Activated CD4-positive, alpha-beta T cell treated with anti-CD3 and anti-CD28 coated beads, Interleukin-2, amount 10 ng/mL, durations not matched to agents 24 days and 14 days (primary cell): ENCODE measurements at regions of chr12 and their contacts with region 1.

Region 1: DNA sequence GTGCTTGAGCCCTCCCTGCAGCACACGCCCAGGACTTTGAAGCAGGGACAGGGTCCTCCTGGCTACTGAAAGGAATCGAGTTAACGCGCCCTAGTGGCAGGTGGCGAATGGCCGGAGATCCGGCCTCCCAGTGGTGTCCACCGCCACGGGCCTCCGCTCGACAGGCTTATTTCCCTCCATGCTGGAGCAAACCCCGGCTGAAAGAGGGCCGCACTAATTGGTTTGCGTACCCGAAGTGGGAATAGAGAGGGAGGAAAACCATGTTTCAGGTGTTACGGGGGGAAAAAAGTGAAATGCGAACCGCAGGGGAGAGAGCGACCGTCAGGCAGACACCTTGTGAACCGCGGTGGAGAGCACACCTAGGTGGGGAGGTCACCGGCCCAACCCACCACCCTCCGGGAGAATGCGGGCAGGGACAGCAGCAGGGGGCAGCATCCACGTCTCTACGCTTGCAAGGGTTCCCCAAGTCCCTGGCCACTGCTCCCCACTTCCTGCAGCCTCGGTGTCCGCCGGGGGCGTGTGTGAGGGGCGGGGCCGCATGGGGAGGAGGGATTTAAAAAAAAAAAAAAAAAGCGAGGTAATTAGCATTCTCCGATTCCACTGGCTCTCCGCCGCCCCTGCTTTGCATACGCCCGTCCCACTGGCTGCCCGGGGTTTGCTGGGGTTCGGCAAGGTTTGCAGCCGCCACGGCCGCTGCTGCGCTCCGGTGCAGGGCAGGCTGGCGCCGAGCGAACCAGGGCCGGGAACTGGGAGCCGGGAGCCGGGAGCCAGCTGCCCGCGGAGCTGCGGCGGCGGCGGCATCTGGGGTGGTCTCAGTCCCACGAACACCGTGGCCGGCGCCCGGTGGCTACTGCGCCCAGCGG is 224.6 kb upstream of the CRY1 start:
- DNase-seq: peak; percentile 97
- H3K4me3 Mint-ChIP-seq: peak overlapping the region; percentile 88
- H3K27ac Mint-ChIP-seq: peak overlapping the region; percentile 50
- H3K4me1 Mint-ChIP-seq: peaks cover 26% of the 10 kb centered on the region
- H3K27me3 Mint-ChIP-seq: peaks cover 28% of the 10 kb centered on the region

Region 2: DNA sequence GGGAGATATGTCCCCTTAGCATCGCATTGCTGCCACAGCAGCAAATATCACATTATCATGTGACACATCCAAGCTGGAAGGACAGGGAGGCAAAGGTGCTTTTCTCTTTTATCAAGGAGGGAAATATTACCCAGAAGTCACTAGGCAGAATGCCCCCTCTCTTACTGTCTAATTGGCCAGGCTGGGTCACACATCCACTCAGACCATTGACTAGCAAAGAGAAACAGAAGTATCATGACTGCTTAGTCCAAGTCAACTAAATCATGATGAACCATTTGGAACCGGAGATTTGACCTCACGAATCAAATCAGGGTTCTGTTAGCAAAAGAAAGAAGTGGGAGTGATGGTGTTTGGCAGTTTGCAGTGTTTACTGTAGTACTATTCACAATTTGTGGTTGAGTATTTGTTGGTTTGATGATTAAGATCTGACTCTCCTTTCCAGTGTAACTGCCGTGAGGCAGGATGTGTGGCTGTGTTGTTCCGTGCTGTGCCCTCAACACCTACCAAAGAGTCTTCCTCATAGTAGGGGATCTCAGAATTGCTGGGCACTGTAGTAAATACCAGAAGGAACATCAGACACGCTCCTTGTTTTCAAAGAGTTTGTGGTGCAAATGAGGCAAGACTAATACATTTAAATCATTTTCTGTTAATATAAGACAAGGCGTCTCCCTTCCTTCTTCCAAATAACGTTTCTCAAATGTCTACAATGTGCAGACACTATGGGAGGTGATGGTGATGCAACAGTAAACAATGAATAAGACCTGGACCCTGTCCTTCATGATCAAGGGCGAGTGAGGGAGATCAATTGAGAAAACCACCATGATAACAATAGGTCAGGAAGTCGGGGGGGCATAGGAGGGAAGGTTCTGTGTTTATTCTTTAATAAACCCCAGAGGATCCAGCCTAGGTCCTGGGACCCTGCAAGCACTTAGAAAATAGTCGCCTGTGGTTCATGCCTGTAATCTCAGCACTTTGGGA is 30.3 kb before region 1 on chr12:
- intact Hi-C with region 1: loop called (anchors 1 kb)
- DNase-seq: peak; percentile 80
- H3K4me3 Mint-ChIP-seq: peak overlapping the region; percentile 29
- H3K27ac Mint-ChIP-seq: peak overlapping the region; percentile 66
- H3K4me1 Mint-ChIP-seq: peaks cover 17% of the 10 kb centered on the region
- H3K27me3 Mint-ChIP-seq: peaks cover 2% of the 10 kb centered on the region

Region 3: DNA sequence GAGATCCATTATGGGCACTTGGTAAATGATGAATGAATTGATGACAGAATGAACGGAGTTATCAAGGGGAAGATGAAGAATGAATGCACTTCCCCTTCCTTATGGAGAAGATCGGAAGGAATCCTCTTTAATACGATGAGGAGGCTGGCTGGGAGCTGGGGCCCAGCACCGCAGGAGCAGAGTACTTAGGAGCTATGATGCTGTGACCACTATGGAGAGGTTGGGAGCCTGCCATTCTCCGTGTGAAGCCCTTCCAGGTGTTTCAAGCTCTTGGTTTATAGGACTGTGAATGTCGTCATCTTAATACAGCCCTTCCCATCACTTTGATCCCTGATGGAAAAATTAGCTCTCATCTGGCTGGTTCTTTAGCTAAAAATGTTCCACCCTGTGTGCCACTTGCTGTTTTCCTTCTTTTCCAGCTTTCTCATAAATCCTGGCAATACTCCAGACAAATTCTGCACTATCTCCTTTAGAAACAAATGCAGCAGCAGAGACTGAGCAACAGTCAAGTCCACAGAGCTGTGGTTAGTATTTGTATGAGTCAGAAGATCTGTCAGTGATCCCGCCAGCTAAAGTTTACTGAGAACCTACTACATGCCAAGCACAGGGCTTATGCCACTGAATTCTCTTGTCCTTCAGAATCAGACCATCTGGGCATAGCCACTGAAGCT is 38.4 kb after region 1 on chr12:
- intact Hi-C with region 1: loop called (anchors 1 kb)
- DNase-seq: peak; percentile 70
- H3K4me3 Mint-ChIP-seq: peak overlapping the region; percentile 4
- H3K27ac Mint-ChIP-seq: no peak overlapping the region
- H3K4me1 Mint-ChIP-seq: peaks cover 65% of the 10 kb centered on the region
- H3K27me3 Mint-ChIP-seq: no peaks in the 10 kb centered on the region

Region 4: DNA sequence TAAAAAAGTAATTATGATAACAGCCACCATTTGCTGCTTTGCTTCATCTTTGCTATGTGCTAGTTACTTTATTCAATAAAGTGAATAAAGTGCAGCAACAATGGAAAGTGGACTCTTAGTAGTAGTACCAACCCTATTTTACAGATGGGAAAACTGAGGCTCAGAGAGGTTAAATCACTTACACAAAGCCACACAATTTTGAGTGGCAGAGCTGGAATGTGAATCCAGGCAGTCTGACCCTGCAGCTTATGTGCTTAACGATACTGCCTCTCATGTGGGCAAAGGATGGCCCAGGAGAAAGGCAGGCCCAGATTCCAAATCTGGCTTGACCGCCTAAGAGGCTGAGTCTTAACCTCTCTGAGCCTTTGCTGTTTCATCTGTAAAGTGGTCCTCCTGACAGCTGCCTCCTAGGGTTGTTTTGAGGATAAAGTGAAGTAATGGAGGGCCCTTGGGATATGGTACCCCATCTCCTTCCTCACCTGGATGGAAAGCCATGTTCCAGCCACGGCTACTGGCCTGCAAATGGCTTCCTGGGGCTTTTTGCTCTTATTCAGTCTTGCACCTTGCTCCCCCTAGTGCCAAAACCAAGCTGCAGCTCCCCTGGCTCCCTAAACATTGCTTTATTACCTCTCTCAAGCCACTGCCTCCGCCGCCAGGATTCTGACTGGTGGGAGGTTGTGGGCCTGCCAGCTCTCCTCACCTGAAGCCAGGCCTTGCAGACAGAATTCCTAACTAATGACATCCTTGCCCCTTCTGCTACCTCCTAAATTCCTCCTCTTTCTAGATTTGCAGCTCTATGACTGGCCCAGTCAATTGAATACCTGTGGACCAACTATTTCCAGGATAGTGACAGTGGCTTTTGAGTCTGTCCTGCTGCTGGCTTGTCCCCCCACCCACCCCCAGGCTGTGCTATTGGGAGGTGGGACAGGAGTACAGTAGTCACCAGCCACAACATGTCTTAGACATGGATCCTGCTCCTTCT is 84.3 kb after region 1 on chr12:
- intact Hi-C with region 1: loop called (anchors 1 kb)
- DNase-seq: peak; percentile 89
- H3K4me3 Mint-ChIP-seq: no peak overlapping the region
- H3K27ac Mint-ChIP-seq: no peak overlapping the region
- H3K4me1 Mint-ChIP-seq: peaks cover 30% of the 10 kb centered on the region
- H3K27me3 Mint-ChIP-seq: no peaks in the 10 kb centered on the region

Region 5: GRCh38 chr12:107685360-107686248 is 367.6 kb after region 1 on chr12 and contains the start of gene PWP1:
- intact Hi-C with region 1: loop called (anchors 5 kb)
- DNase-seq: peak; percentile 99
- H3K4me3 Mint-ChIP-seq: peak within 1 kb of the TSS; percentile 93
- H3K27ac Mint-ChIP-seq: peak within 1 kb of the TSS; percentile 92
- H3K4me1 Mint-ChIP-seq: peaks cover 26% of the 10 kb centered on the region
- H3K27me3 Mint-ChIP-seq: peaks cover 2% of the 10 kb centered on the region
- total RNA-seq, gene PWP1: 56.3 and 63.2 TPM in 2 replicates

Region 6: DNA sequence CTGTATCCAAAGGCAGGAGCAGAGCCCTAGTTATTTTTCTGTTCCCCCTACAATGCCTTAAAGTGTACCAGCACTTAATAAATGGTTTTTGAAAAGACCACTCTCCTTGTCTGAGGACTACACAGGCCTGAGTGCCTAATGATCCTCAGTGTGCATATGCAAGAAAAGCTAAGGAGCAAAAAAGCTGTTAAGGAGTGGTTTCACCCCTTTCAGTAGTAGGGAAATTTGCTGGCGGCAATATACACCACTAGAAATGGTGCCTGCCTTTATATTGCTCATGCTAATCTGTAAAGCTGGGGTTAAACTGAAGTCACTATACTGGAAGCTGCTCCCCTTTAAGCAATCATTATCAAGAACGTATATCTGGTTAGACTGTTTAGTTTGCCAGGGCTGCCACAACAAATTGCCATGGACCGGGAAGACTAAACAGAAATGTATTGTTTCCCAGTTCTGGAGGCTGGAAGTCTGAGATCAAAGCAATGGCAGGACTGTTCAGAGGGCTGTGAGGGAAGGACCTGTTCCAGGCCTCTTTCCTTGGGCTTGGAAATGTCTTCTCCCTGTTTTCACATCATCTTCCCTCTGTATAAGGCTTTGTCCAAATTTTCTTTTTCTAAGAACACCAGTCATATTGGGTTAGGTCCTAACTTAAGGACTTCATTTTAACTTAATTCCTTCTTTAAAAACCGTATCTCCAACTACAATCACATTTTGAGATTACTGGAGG is 412.8 kb after region 1 on chr12:
- intact Hi-C with region 1: no loop called
- DNase-seq: no peak
- H3K4me3 Mint-ChIP-seq: no peak overlapping the region
- H3K27ac Mint-ChIP-seq: no peak overlapping the region
- H3K4me1 Mint-ChIP-seq: no peaks in the 10 kb centered on the region
- H3K27me3 Mint-ChIP-seq: no peaks in the 10 kb centered on the region